ENCODE measurements at regions of chr2 and their contacts with region 1.

Region 1: GRCh38 chr2:27095745-27096651 is 9.4 kb downstream of the KHK start:
- DNase-seq: peak; percentile 75
- ATAC-seq: peak; percentile 88

Region 2: GRCh38 chr2:26807788-26808460 is 288.1 kb before region 1 on chr2:
- intact Hi-C with region 1: no loop called
- DNase-seq: no peak
- ATAC-seq: no peak

Region 3: DNA sequence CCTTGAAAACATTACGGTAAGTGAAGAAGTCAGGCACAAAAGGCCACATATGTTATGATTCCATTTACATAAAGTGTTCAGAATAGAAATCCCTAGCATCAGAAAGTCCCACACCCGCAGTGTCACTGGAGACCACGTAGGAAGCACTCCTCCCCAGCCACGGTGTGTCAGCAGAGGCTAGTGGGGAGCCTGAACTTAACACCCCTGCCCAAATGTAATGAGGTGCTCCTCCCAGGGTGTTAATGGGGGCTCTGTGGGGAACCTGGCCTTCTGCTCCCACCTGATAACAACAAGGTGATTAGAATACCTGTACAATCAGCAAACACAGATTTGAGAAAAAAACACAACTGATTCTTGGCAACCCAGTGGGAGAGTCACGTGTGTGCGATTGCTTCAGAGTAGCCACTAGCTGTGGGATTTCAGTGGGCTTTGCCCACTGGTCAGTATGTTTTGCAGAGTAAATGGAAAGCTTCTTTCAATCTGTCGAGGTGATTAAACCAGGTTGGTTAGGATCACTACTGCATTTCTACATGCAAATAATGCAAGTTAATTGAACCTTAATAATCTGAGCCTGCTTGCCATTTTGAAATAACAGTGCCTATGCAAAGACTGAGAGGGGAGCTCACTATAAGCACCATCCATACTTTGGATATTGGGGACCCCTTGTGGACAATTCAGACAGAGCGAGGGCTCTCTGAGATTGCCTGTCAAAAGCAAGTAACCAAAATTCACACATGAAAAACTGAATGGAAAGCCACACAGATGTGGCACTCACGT is 95.2 kb after region 1 on chr2:
- intact Hi-C with region 1: loop called (anchors 1 kb)
- DNase-seq: no peak
- ATAC-seq: peak; percentile 64

Region 4: DNA sequence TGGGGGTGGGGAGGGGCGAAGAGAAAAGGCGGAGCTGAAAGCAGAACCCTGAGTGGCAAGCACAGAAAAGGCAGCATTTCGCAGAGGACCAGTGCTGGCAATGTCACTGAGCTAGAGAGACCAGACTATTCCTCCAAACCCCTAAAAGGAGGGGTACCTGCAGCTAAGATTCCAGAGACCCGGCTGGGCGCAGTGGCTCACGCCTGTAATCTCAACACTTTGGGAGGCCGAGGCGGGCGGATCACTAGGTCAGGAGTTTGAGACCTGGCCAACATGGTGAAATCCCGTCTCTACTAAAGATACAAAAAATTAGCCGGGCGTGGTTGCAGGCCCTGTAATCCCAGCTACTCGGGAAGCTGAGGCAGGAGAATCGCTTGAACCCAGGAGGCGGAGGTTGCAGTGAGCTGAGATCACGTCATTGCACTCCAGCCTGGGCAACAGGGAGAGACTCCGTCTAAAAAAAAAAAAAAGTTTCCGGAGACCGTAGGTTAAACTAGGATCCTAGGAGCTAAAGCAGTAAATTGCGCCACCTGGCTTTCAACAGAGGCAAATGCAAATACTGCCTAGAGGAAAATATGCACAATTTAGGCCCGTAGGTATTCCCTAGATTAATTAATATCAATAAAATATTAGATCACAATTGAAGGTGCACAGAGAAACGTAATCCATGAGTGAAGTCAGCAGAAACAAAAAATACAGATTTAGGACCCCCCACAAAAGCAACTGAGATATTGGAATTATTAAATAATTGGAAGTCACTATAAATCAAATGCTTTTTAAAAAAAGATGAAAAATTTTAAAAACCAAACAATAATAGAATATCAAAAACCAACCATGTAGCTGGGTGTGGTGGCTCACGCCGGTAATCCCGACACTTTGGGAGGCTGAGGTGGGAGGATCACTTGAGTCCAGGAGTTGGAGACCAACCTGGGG is 207.4 kb after region 1 on chr2:
- intact Hi-C with region 1: loop called (anchors 5 kb)
- DNase-seq: no peak
- ATAC-seq: peak; percentile 61

Measured in Right ventricle myocardium inferior (tissue), 1 donor.